IMR-90 (cell line): ENCODE measurements at regions of chr1 and their contacts with region 1.

Region 1: DNA sequence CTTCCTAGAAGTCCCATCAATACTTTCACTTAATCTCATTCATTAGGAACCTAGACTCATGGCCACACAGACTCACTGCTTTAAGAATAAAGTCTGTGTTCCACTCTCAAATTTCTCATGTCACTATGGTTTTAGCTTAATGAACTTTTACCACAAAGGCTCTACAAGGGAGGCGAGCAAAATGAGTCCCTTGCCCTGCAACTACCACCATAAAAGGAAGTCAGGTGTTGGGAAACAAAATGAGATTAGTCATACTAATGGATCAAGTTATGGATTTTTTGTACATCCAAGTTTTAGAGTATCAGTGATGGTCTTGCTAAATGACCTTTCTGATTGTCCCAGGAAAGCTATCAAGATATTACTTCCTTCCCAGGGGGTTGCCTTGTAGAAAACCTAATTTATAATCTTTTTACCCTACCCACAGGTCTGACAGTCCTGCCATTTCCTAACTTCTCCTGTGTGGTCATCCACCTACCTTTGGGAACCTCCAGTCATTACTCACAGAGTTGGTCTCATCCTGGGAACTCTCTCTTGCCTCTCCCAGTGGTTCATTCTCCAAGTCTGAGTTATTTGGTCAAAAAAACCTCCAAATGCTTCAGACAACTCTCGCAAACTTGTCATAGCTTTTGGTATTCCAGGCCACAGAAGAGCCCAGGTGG is 51.8 kb upstream of the SLC16A1 start:
- DNase-seq: no peak
- ATAC-seq: no peak
- H3K4me3 ChIP-seq: no peak overlapping the region
- H3K27ac ChIP-seq: no peak overlapping the region
- H3K4me1 ChIP-seq: no peaks in the 10 kb centered on the region
- H3K27me3 ChIP-seq: no peaks in the 10 kb centered on the region
- CTCF ChIP-seq: no peak
- POLR2A ChIP-seq: no peak
- RAD21 ChIP-seq: no peak

Region 2: DNA sequence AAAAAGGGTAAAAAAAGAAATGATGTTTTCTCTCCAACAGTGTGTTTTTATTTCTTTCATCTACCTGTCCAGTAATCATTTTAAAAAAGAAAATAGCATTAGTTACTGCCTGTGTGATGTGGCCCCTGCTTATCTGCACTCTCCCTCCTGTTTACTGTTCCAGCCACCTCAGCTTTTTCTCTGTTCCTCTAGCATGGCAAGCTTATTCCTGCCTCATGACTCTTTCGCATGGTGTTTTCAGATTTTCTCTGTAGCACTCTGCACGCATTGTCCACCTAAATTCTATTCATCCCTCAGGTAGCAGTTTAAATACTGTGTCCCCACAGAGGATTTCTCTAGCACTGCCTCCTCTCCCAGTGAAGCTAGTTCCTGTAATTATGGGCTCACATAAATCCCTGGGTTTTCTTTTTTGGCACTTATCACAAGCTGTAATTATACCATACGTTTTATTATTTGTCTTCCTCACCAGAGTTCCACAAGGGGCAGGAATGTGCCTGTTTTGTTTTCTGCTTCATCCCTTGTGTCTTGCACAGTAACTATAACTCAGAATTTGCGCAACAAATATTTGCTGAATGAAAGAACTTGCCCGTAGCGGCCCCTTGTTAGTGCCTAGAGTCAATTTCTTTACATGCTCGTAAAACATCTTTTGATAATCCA is 13.7 kb after region 1 on chr1:
- CTCF ChIA-PET with region 1: interaction called, 5 read pairs
- POLR2A ChIA-PET with region 1: interaction called, 10 read pairs
- dilution Hi-C with region 1: no loop called
- in situ Hi-C with region 1: no loop called
- intact Hi-C with region 1: no loop called
- DNase-seq: no peak
- ATAC-seq: peak; percentile 42; the same call in 1 of the 2 replicates
- H3K4me3 ChIP-seq: no peak overlapping the region
- H3K27ac ChIP-seq: no peak overlapping the region
- H3K4me1 ChIP-seq: no peaks in the 10 kb centered on the region
- H3K27me3 ChIP-seq: no peaks in the 10 kb centered on the region
- CTCF ChIP-seq: no peak
- POLR2A ChIP-seq: no peak
- RAD21 ChIP-seq: no peak